ENCODE measurements at regions of chr12 and their contacts with region 1.

Region 1: GRCh38 chr12:64682572-64683277 is 72.4 kb downstream of the RASSF3 start:
- DNase-seq: no peak
- H3K4me3 Mint-ChIP-seq: no peak overlapping the region
- H3K27ac Mint-ChIP-seq: peak overlapping the region; percentile 97
- H3K4me1 Mint-ChIP-seq: peaks cover 97% of the 10 kb centered on the region
- H3K27me3 Mint-ChIP-seq: no peaks in the 10 kb centered on the region

Region 2: GRCh38 chr12:64669270-64669842 is 13.4 kb before region 1 on chr12:
- CTCF ChIA-PET with region 1: interaction called, 10 read pairs
- DNase-seq: peak; percentile 66
- H3K4me3 Mint-ChIP-seq: peak overlapping the region; percentile 82
- H3K27ac Mint-ChIP-seq: peak overlapping the region; percentile 99
- H3K4me1 Mint-ChIP-seq: peaks cover 94% of the 10 kb centered on the region
- H3K27me3 Mint-ChIP-seq: no peaks in the 10 kb centered on the region